ENCODE measurements at regions of chr12 and their contacts with region 1.

Region 1: DNA sequence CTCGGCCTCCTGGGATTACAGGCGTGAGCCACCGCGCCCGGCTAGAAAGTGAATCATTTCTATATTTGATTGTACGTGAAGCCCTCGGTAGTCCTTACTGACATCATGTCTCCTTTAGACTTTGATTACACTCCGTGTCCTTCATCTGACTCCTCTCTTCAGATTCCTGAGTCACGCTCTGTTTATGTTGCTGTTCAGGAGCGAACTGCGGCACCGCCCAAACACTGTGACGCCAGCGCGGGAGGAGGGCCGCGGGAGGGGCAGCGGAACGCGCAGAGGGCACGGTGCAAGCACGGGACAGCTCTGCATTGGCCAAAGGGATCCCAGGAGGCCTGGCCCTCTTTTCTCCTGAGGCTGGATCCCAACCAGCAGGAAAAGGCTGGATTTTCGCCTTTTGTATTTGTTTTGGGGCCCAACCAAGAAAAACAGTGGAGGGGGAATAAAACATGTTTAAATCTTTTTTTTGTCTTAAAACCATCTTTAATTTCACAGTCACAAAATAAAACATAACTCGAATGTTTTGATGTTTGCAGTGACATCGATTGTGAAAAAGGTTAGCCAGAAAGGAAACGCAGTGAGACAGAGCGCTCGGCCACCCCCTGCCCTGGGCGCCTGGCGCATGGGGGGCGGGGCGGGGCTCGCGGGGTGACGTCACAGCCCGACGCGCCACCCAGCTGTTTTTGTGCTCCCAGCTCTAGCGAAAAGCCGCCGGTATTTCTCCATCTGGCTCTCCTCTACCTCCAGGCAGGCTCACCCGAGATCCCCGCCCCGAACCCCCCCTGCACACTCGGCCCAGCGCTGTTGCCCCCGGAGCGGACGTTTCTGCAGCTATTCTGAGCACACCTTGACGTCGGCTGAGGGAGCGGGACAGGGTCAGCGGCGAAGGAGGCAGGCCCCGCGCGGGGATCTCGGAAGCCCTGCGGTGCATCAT is at the start of gene GABARAPL1:
- DNase-seq: peak; percentile 96
- ATAC-seq: peak; percentile 91
- H3K4me3 ChIP-seq: peak within 1 kb of the TSS; percentile 84 to 89
- H3K27ac ChIP-seq: peak within 1 kb of the TSS; percentile 79
- H3K4me1 ChIP-seq: peaks cover 22 to 44% of the 10 kb centered on the region in 2 experiments; a peak in 3 of 4 replicates
- H3K27me3 ChIP-seq: no peaks in the 10 kb centered on the region
- CTCF ChIP-seq: no peak
- POLR2A ChIP-seq: no peak
- RAD21 ChIP-seq: no peak
- total RNA-seq, gene GABARAPL1: 35.5 TPM

Region 2: DNA sequence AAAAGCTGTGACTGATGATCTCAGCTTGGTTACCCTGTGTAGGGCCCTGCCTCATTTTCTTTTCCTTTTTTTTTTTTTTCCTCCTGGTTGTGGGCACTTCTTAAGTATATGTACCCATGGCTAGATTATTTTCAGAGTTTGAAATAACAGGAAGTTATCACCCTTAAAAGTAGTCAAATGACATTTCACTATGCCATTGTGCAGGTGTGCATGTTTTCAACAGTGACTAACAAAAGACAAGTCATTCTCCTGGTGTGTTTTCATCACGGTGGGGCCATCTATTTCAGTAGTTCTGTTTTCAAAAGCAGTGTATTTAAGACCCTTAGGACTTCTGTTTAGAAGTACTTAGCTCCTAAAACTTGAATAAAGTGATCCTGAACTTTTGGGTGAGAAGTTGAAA is 15.2 kb after region 1 on chr12:
- CTCF ChIA-PET with region 1: no interaction called
- POLR2A ChIA-PET with region 1: no interaction called
- RAD21 ChIA-PET with region 1: no interaction called
- intact Hi-C with region 1: no loop called
- DNase-seq: no peak
- ATAC-seq: no peak
- H3K4me3 ChIP-seq: no peak overlapping the region
- H3K27ac ChIP-seq: no peak overlapping the region
- H3K4me1 ChIP-seq: no peaks in the 10 kb centered on the region
- H3K27me3 ChIP-seq: no peaks in the 10 kb centered on the region
- CTCF ChIP-seq: no peak
- POLR2A ChIP-seq: no peak
- RAD21 ChIP-seq: no peak

Region 3: GRCh38 chr12:10252201-10252600 is 39.7 kb after region 1 on chr12:
- CTCF ChIA-PET with region 1: no interaction called
- POLR2A ChIA-PET with region 1: no interaction called
- RAD21 ChIA-PET with region 1: no interaction called
- intact Hi-C with region 1: no loop called
- DNase-seq: no peak
- ATAC-seq: no peak
- H3K4me3 ChIP-seq: no peak overlapping the region
- H3K27ac ChIP-seq: no peak overlapping the region
- H3K4me1 ChIP-seq: no peaks in the 10 kb centered on the region
- H3K27me3 ChIP-seq: no peaks in the 10 kb centered on the region
- CTCF ChIP-seq: no peak
- POLR2A ChIP-seq: no peak
- RAD21 ChIP-seq: no peak

Region 4: GRCh38 chr12:10613349-10614055 is 401.0 kb after region 1 on chr12 and contains the start of gene MAGOHB:
- CTCF ChIA-PET with region 1: no interaction called
- POLR2A ChIA-PET with region 1: no interaction called
- RAD21 ChIA-PET with region 1: no interaction called
- intact Hi-C with region 1: loop called (anchors 1 kb)
- DNase-seq: peak; percentile 90
- ATAC-seq: peak; percentile 95
- H3K4me3 ChIP-seq: peak within 1 kb of the TSS; percentile 71 to 92
- H3K27ac ChIP-seq: peak within 1 kb of the TSS; percentile 42
- H3K4me1 ChIP-seq: peaks cover 0 to 19% of the 10 kb centered on the region in 2 experiments; a peak in 3 of 4 replicates
- H3K27me3 ChIP-seq: no peaks in the 10 kb centered on the region
- CTCF ChIP-seq: no peak
- POLR2A ChIP-seq: peak; percentile 88
- RAD21 ChIP-seq: no peak
- total RNA-seq, gene MAGOHB: 55.8 TPM

Region 5: GRCh38 chr12:10716704-10717315 is 504.3 kb after region 1 on chr12:
- CTCF ChIA-PET with region 1: no interaction called
- POLR2A ChIA-PET with region 1: no interaction called
- RAD21 ChIA-PET with region 1: no interaction called
- intact Hi-C with region 1: loop called (anchors 2 kb)
- DNase-seq: peak; percentile 75
- ATAC-seq: peak; percentile 93
- H3K4me3 ChIP-seq: peak overlapping the region; percentile 13 to 41; a peak in 3 of 4 replicates
- H3K27ac ChIP-seq: peak overlapping the region; percentile 68
- H3K4me1 ChIP-seq: peaks cover 54 to 63% of the 10 kb centered on the region in 2 experiments
- H3K27me3 ChIP-seq: no peaks in the 10 kb centered on the region
- CTCF ChIP-seq: no peak
- POLR2A ChIP-seq: no peak
- RAD21 ChIP-seq: no peak

Measured in HCT116 (cell line).